CD4-positive, alpha-beta memory T cell (primary cell): ENCODE measurements at regions of chr4 and their contacts with region 1.

Region 1: DNA sequence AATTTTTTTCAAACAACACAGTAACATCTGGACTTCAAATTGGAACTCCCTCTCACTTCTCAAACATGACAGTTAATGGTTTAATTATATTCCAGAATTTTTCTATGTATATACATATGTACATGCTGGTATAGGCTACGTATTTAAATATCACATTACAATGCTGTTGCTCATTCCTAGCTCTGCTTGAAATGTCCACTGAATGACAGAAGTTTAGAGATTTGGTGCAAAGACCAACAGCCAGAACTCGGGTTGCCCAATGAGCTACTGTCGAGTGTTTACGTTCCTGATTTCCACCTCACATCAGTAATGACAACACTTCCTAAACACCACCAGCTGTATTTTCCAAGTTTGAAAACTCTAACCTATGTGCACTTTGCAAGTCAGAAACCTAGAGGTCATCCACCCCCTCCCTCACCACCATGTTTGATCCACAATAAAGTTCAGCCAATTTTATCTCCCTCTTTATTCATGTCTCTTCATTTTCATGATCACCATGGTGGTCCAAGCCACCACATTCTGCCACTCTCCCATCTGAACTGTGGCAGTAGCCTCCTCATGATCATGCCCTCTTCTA is 49.3 kb upstream of the RPL34 start:
- DNase-seq: no peak
- H3K4me3 ChIP-seq: no peak overlapping the region
- H3K4me3 Mint-ChIP-seq: peak overlapping the region in 1 of 8 donors; percentile 4
- H3K27ac ChIP-seq: no peak overlapping the region
- H3K27ac Mint-ChIP-seq: peak overlapping the region in 1 of 7 donors; percentile 27
- H3K4me1 ChIP-seq: peaks cover 7% of the 10 kb centered on the region
- H3K4me1 Mint-ChIP-seq: peaks cover 2 to 9% (median 5%) of the 10 kb centered on the region in 4 donors
- H3K27me3 ChIP-seq: no peaks in the 10 kb centered on the region
- H3K27me3 Mint-ChIP-seq: peaks cover 0 to 2% of the 10 kb centered on the region in 2 donors

Region 2: GRCh38 chr4:108024878-108025165 is 546.3 kb before region 1 on chr4:
- CTCF ChIA-PET with region 1: interaction called, 229 read pairs
- POLR2A ChIA-PET with region 1: interaction called, 4 read pairs
- intact Hi-C with region 1: loop called (anchors 1 kb)
- DNase-seq: no peak
- H3K4me3 ChIP-seq: no peak overlapping the region
- H3K4me3 Mint-ChIP-seq: no peak overlapping the region
- H3K27ac ChIP-seq: no peak overlapping the region
- H3K27ac Mint-ChIP-seq: peak overlapping the region in 1 of 7 donors; percentile 22
- H3K4me1 ChIP-seq: peaks cover 10% of the 10 kb centered on the region
- H3K4me1 Mint-ChIP-seq: peaks cover 10 to 18% (median 11%) of the 10 kb centered on the region in 4 donors
- H3K27me3 ChIP-seq: no peaks in the 10 kb centered on the region
- H3K27me3 Mint-ChIP-seq: no peaks in the 10 kb centered on the region

Region 3: DNA sequence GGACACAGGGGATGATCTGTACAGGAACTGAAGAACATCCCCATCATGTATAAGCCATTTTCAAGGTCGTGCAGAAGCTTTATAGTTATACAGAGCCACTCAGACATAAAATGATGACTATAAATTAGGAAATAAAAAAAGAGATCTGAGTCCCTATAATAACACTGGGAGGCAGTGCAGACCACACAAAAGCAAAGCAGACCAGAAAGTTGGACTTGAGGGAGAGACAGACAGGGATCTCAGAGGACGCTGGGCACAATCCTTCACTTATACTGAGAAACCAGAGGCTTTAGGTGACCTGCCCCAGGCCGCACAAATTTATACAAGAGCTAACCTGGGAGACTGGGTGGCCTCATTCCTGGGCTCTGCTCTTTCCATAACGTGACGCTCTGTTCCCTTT is 510.9 kb before region 1 on chr4:
- CTCF ChIA-PET with region 1: interaction called, 36 read pairs
- POLR2A ChIA-PET with region 1: interaction called, 3 read pairs
- intact Hi-C with region 1: loop called (anchors 1 kb)
- DNase-seq: no peak
- H3K4me3 ChIP-seq: no peak overlapping the region
- H3K4me3 Mint-ChIP-seq: no peak overlapping the region
- H3K27ac ChIP-seq: no peak overlapping the region
- H3K27ac Mint-ChIP-seq: peak overlapping the region in 4 of 7 donors; percentile 9 to 66 (median 34)
- H3K4me1 ChIP-seq: peaks cover 39% of the 10 kb centered on the region
- H3K4me1 Mint-ChIP-seq: peaks cover 24 to 56% (median 45%) of the 10 kb centered on the region in 4 donors
- H3K27me3 ChIP-seq: no peaks in the 10 kb centered on the region
- H3K27me3 Mint-ChIP-seq: no peaks in the 10 kb centered on the region

Region 4: DNA sequence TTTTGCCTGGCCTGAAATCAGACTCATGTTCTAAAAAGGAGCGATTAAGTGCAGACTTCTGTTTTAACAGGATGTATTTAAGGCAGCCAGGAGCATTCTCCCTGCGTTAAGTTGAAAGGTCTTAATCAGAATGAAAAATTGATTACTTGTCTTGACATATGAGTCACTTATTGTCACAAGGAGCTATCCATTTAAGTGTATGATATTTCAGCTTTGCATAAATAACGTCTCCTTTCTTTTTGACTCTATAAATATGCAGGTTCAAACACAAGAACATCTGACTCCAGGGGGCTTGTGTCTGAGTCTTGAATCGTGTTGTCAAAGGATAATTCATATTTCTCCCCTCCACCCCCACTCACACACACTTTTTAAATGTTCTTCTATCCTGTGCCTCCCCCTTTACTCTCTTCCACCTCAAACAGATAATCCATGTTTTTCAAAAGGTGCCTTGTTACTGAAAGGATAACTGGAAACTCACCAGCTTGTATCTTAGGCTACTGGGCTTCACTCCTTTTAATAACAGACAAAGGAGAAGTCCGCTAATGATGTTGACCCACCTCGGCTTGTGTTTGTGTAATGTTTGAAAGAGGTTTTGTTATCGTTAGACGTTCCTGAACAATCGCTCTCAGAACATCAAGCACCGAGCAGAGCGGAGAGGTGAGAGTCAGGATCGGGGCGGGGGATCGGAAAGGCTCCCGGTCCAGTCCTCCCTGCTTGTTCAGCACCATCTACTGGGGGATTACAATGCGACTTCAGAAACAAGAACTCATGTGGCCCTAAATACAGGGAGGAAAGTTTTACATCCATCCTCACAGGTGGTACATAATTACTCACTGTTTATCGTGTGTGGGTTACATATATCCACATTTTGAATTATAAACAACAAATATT is 58.2 kb before region 1 on chr4:
- CTCF ChIA-PET with region 1: interaction called, 5 read pairs
- POLR2A ChIA-PET with region 1: no interaction called
- intact Hi-C with region 1: loop called (anchors 5 kb)
- DNase-seq: peak in 4 of 5 donors; percentile 10 to 38 (median 24)
- H3K4me3 ChIP-seq: no peak overlapping the region
- H3K4me3 Mint-ChIP-seq: peak overlapping the region in 7 of 8 donors; percentile 1 to 82 (median 71)
- H3K27ac ChIP-seq: no peak overlapping the region
- H3K27ac Mint-ChIP-seq: peak overlapping the region in 1 of 7 donors; percentile 5
- H3K4me1 ChIP-seq: no peaks in the 10 kb centered on the region
- H3K4me1 Mint-ChIP-seq: peaks cover 7 to 16% (median 9%) of the 10 kb centered on the region in 4 donors
- H3K27me3 ChIP-seq: no peaks in the 10 kb centered on the region
- H3K27me3 Mint-ChIP-seq: peaks cover 0 to 4% of the 10 kb centered on the region in 2 donors

Region 5: DNA sequence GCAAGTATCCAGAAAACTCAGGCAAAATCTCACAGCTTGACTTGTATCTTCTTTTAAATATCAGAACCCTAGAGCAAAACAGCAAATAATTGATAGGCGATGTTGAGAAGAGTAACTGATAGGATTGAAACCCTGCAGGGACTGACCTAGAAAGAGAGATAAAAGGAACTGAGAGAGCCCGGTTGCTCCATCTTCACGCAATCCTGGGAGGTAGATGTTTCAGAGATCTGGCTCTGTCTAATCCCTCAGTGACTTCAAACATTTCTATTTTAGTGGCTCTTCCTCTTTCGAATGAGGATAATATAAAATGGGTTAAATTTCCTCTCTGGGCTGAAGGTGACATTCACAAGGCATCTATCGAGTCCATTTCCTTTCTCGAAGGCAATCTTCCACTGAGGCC is 10.0 kb after region 1 on chr4:
- CTCF ChIA-PET with region 1: interaction called, 12 read pairs
- POLR2A ChIA-PET with region 1: no interaction called
- intact Hi-C with region 1: no loop called
- DNase-seq: no peak
- H3K4me3 ChIP-seq: no peak overlapping the region
- H3K4me3 Mint-ChIP-seq: no peak overlapping the region
- H3K27ac ChIP-seq: no peak overlapping the region
- H3K27ac Mint-ChIP-seq: no peak overlapping the region
- H3K4me1 ChIP-seq: no peaks in the 10 kb centered on the region
- H3K4me1 Mint-ChIP-seq: no peaks in the 10 kb centered on the region
- H3K27me3 ChIP-seq: no peaks in the 10 kb centered on the region
- H3K27me3 Mint-ChIP-seq: no peaks in the 10 kb centered on the region

Region 6: GRCh38 chr4:108683479-108683878 is 112.4 kb after region 1 on chr4:
- CTCF ChIA-PET with region 1: no interaction called
- POLR2A ChIA-PET with region 1: no interaction called
- intact Hi-C with region 1: no loop called
- DNase-seq: peak in 3 of 5 donors; percentile 5 to 11 (median 8)
- H3K4me3 ChIP-seq: no peak overlapping the region
- H3K4me3 Mint-ChIP-seq: no peak overlapping the region
- H3K27ac ChIP-seq: no peak overlapping the region
- H3K27ac Mint-ChIP-seq: no peak overlapping the region
- H3K4me1 ChIP-seq: no peaks in the 10 kb centered on the region
- H3K4me1 Mint-ChIP-seq: peaks cover 0 to 4% (median 1%) of the 10 kb centered on the region in 4 donors
- H3K27me3 ChIP-seq: no peaks in the 10 kb centered on the region
- H3K27me3 Mint-ChIP-seq: no peaks in the 10 kb centered on the region